H1 (cell line): ENCODE measurements at regions of chr11 and their contacts with region 1.

Region 1: DNA sequence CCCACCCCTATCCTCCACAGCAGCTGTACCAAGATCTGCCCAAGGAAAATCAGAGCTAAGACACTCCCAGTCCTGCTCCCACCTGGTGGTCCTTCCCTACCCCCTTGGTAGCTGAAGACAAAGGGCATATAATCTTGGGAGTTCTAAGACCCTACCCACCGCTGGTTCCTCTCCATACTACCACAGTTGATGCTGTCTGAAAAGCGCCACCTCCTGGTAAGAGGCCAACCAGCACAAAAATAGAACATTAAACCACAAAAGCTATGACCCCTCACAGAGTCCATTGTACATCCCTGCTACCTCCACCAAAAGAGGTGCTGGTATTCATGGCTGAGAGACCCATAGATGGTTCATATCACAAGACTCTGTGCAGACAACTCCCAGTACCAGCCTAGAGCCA is 161.5 kb upstream of the ARHGAP42 start:
- DNase-seq: peak in 1 of 2 experiments; percentile 78
- H3K4me3 ChIP-seq: no peak overlapping the region
- H3K27ac ChIP-seq: no peak overlapping the region
- H3K4me1 ChIP-seq: 0 out of 7 replicates have a peak, but pooled peaks cover 0 to 2% (median 0%) of the 10 kb centered on the region in 4 experiments
- H3K27me3 ChIP-seq: no peaks in the 10 kb centered on the region
- CTCF ChIP-seq: peak; percentile 40 to 83 (median 72)
- EP300 ChIP-seq: no peak
- POLR2A ChIP-seq: no peak
- RAD21 ChIP-seq: peak; percentile 86 to 89

Region 2: GRCh38 chr11:100328658-100329315 is 196.8 kb before region 1 on chr11:
- CTCF ChIA-PET with region 1: interaction called, 13 read pairs
- POLR2A ChIA-PET with region 1: no interaction called
- DNase-seq: no peak
- H3K4me3 ChIP-seq: no peak overlapping the region
- H3K27ac ChIP-seq: no peak overlapping the region
- H3K4me1 ChIP-seq: no peaks in the 10 kb centered on the region
- H3K27me3 ChIP-seq: no peaks in the 10 kb centered on the region
- CTCF ChIP-seq: 0 out of 4 replicates have a peak, but pooled peaks of 1 of the 3 experiments have one; percentile 25
- EP300 ChIP-seq: no peak
- POLR2A ChIP-seq: no peak
- RAD21 ChIP-seq: peak; percentile 53 to 64

Region 3: GRCh38 chr11:100501450-100501849 is 24.2 kb before region 1 on chr11:
- CTCF ChIA-PET with region 1: interaction called, 11 read pairs
- POLR2A ChIA-PET with region 1: no interaction called
- DNase-seq: no peak
- H3K4me3 ChIP-seq: no peak overlapping the region
- H3K27ac ChIP-seq: no peak overlapping the region
- H3K4me1 ChIP-seq: no peaks in the 10 kb centered on the region
- H3K27me3 ChIP-seq: no peaks in the 10 kb centered on the region
- CTCF ChIP-seq: no peak
- EP300 ChIP-seq: no peak
- POLR2A ChIP-seq: no peak
- RAD21 ChIP-seq: no peak

Region 4: DNA sequence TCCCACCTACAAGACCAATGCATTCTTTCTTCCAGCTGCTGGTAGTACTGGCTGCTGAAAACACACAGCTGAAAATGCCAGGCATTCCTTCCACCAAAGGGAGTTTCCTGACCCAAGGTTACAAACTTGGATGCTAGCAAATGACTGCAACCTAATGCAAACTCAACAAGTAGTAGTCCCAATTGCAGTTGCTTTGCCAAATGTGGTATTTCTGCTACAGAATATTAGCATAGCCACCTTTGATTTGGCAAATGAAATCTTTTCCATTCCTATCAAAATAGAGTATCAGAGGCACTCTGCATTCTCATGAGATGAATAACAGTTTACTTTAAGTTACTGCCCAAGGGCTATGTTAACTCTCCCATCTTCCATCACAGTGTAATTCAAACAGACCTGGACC is 10.5 kb before region 1 on chr11:
- CTCF ChIA-PET with region 1: interaction called, 24 read pairs
- POLR2A ChIA-PET with region 1: no interaction called
- DNase-seq: no peak
- H3K4me3 ChIP-seq: no peak overlapping the region
- H3K27ac ChIP-seq: no peak overlapping the region
- H3K4me1 ChIP-seq: peaks cover 0 to 2% (median 0%) of the 10 kb centered on the region in 4 experiments; a peak in 2 of 7 replicates
- H3K27me3 ChIP-seq: no peaks in the 10 kb centered on the region
- CTCF ChIP-seq: no peak
- EP300 ChIP-seq: no peak; a peak in 1 of 3 replicates
- POLR2A ChIP-seq: no peak
- RAD21 ChIP-seq: 0 out of 4 replicates have a peak, but pooled peaks of 1 of the 2 experiments have one; percentile 11

Region 5: DNA sequence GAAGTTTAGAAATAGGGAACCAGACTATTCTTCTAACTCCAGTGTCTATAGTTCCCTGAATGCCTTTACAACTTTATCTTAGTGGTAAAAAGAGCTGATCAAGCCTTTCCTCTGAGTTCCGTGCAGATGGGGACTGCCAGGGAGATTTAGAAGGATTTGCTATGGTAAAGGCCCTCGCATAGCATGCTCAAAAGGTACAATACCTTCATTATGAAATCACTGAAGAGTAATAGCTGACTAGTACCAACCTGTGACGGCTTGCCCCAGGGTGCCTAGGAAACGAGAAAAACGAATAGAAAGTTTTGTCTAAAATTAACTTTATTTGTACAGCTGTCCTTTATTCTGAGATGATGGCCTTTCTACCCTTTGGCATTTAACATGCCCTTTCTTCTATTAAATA is 11.3 kb after region 1 on chr11:
- CTCF ChIA-PET with region 1: interaction called, 11 read pairs
- POLR2A ChIA-PET with region 1: no interaction called
- DNase-seq: no peak
- H3K4me3 ChIP-seq: no peak overlapping the region
- H3K27ac ChIP-seq: no peak overlapping the region
- H3K4me1 ChIP-seq: no peaks in the 10 kb centered on the region
- H3K27me3 ChIP-seq: no peaks in the 10 kb centered on the region
- CTCF ChIP-seq: no peak
- EP300 ChIP-seq: no peak
- POLR2A ChIP-seq: no peak
- RAD21 ChIP-seq: no peak

Region 6: GRCh38 chr11:100543386-100543785 is 17.8 kb after region 1 on chr11:
- CTCF ChIA-PET with region 1: interaction called, 11 read pairs
- POLR2A ChIA-PET with region 1: no interaction called
- DNase-seq: no peak
- H3K4me3 ChIP-seq: no peak overlapping the region
- H3K27ac ChIP-seq: no peak overlapping the region
- H3K4me1 ChIP-seq: no peaks in the 10 kb centered on the region
- H3K27me3 ChIP-seq: no peaks in the 10 kb centered on the region
- CTCF ChIP-seq: no peak
- EP300 ChIP-seq: no peak
- POLR2A ChIP-seq: no peak
- RAD21 ChIP-seq: no peak